A673 (cell line): ENCODE measurements at regions of chr5 and their contacts with region 1.

Region 1: DNA sequence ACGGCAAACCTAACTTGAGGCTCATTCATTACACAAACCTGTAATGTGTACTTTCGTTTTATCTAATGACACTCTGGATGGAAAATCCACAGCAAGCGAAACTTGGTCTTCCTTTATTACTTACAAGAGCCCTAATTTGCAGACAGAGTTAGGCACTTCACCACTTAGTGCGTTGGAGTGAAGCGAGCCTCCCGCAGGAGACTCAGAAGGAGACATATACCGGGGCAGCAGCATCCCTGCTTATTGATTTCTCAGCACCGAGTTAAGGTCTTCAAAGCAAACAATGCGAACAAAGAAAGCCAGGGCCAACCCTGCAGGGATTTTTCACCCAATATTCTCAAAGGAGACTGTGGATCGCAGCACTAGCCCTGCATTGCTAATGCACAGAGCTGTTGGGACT is 28.6 kb downstream of the LSM11 start:
- DNase-seq: no peak
- H3K4me3 ChIP-seq: no peak overlapping the region
- H3K27ac ChIP-seq: no peak overlapping the region
- H3K4me1 ChIP-seq: no peaks in the 10 kb centered on the region
- H3K27me3 ChIP-seq: no peaks in the 10 kb centered on the region
- CTCF ChIP-seq: no peak

Region 2: DNA sequence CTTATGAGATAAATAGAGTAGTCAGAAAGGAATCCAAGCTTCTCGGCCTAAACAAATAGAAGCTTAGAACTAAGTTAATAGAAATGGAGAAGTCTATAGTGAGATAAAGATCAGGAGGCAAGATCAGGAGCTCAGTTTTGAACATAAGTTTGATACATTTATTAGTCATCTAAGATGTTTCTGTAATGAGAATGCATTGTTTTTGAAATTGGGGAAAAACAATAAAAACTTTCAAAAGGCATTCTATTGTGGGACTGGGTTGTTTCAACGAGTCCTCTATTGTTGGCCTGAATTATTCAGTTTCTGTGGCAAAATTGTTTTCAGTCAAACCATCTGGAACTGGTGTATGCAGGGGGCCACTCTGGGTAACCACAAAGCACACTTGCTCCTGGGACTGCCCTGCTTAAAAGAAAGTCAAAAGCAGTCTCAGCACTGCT is 267.8 kb after region 1 on chr5:
- CTCF ChIA-PET with region 1: no interaction called
- POLR2A ChIA-PET with region 1: interaction called, 10 read pairs
- intact Hi-C with region 1: no loop called
- DNase-seq: no peak
- H3K4me3 ChIP-seq: no peak overlapping the region
- H3K27ac ChIP-seq: no peak overlapping the region
- H3K4me1 ChIP-seq: no peaks in the 10 kb centered on the region
- H3K27me3 ChIP-seq: no peaks in the 10 kb centered on the region
- CTCF ChIP-seq: no peak